ENCODE measurements at regions of chr1 and their contacts with region 1.

Region 1: DNA sequence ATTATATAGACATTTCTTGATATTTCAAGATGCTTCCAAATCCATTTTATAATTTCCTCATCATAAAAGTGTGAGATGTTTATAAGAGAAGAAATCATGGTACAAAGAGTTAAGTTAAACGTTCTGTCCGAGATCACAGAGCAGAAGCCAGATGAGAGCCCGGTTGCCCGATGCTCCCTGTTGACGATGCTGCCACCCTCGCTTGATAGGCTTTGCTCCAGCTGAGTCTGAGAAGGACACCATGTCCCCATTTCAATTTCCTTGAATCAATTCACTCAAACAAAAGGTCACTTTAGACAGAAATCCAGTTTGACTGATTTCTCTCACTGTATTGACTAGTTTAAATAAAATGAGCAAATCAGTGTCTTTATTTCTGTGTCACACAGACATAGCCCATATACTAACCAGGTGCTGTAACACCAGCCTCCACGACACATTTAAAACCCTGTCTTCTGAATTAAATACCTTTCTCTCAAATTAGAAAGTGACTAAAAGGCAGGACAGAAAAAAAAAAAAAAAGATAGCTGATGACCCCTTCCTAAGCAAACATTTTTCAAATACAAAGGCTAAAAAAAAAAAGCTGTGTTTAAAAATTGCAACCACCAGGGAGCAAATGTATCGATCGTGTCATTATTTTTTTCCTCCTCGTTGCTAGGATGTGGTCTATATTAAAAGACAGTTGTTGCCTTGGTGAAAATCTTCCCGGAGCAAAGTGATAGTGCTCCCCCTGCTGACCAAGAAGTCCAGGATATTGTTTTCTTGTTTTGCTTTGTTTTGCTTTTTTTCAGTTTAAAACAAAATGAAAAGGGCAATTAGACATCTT is 35.2 kb downstream of the DNASE2B start:
- DNase-seq: peak; percentile 31 to 92 (median 53)
- ATAC-seq: peak; percentile 73
- H3K4me3 ChIP-seq: peak overlapping the region; percentile 34 to 46
- H3K4me3 Mint-ChIP-seq: peak overlapping the region; percentile 76
- H3K27ac ChIP-seq: peak overlapping the region; percentile 73 to 76
- H3K27ac Mint-ChIP-seq: peak overlapping the region; percentile 75
- H3K4me1 ChIP-seq: peaks cover 49% of the 10 kb centered on the region
- H3K4me1 Mint-ChIP-seq: peaks cover 9% of the 10 kb centered on the region
- H3K27me3 ChIP-seq: no peaks in the 10 kb centered on the region
- H3K27me3 Mint-ChIP-seq: no peaks in the 10 kb centered on the region
- CTCF ChIP-seq: peak; percentile 65

Region 2: GRCh38 chr1:83799594-83799993 is 633.9 kb before region 1 on chr1:
- CTCF ChIA-PET with region 1: no interaction called
- POLR2A ChIA-PET with region 1: no interaction called
- intact Hi-C with region 1: no loop called
- DNase-seq: no peak
- ATAC-seq: no peak
- H3K4me3 ChIP-seq: no peak overlapping the region
- H3K4me3 Mint-ChIP-seq: no peak overlapping the region
- H3K27ac ChIP-seq: no peak overlapping the region
- H3K27ac Mint-ChIP-seq: no peak overlapping the region
- H3K4me1 ChIP-seq: no peaks in the 10 kb centered on the region
- H3K4me1 Mint-ChIP-seq: no peaks in the 10 kb centered on the region
- H3K27me3 ChIP-seq: no peaks in the 10 kb centered on the region
- H3K27me3 Mint-ChIP-seq: no peaks in the 10 kb centered on the region
- CTCF ChIP-seq: no peak

Region 3: DNA sequence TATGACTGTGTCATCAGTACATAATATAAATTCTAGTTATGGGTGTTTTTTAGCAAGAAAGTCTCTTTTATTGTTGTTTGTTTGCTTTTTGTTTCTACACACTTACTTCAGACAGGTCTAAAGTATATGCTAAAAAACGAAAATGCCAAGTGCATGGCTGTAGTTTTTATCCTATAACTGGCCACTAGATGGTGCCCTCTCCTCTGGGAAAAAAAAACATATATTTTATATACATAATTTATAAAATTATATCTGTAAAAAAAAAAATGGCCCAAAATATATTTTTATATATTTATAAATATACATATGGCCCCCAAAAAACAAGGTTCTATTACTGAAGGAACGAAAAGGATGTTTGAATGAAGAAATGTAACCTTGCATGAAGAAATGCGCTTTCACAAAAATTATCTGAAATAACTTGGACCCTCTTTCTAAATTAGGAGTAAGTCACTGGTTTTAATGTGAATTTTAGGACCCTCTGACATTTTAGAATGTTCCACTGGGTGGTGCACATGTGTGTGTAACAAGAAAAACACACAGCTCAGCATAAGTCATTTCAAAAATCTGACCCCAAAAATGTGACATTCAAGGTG is 528.1 kb before region 1 on chr1:
- CTCF ChIA-PET with region 1: no interaction called
- POLR2A ChIA-PET with region 1: no interaction called
- intact Hi-C with region 1: loop called in 1 of 2 experiments (anchors 10 kb)
- DNase-seq: peak in 3 of 9 experiments; percentile 7 to 50 (median 40)
- ATAC-seq: peak; percentile 46
- H3K4me3 ChIP-seq: no peak overlapping the region
- H3K4me3 Mint-ChIP-seq: no peak overlapping the region
- H3K27ac ChIP-seq: no peak overlapping the region
- H3K27ac Mint-ChIP-seq: no peak overlapping the region
- H3K4me1 ChIP-seq: no peaks in the 10 kb centered on the region
- H3K4me1 Mint-ChIP-seq: no peaks in the 10 kb centered on the region
- H3K27me3 ChIP-seq: no peaks in the 10 kb centered on the region
- H3K27me3 Mint-ChIP-seq: peaks cover 9% of the 10 kb centered on the region
- CTCF ChIP-seq: peak; percentile 79

Region 4: GRCh38 chr1:84077476-84078107 is 355.9 kb before region 1 on chr1:
- CTCF ChIA-PET with region 1: no interaction called
- POLR2A ChIA-PET with region 1: no interaction called
- intact Hi-C with region 1: loop called in 1 of 2 experiments (anchors 5 kb)
- DNase-seq: peak; percentile 48 to 88 (median 74)
- ATAC-seq: peak; percentile 89
- H3K4me3 ChIP-seq: peak overlapping the region; percentile 90 to 91
- H3K4me3 Mint-ChIP-seq: peak overlapping the region; percentile 87
- H3K27ac ChIP-seq: peak overlapping the region; percentile 72 to 76
- H3K27ac Mint-ChIP-seq: peak overlapping the region; percentile 86
- H3K4me1 ChIP-seq: peaks cover 14% of the 10 kb centered on the region
- H3K4me1 Mint-ChIP-seq: peaks cover 13% of the 10 kb centered on the region
- H3K27me3 ChIP-seq: no peaks in the 10 kb centered on the region
- H3K27me3 Mint-ChIP-seq: no peaks in the 10 kb centered on the region
- CTCF ChIP-seq: no peak

Region 5: GRCh38 chr1:84382127-84382526 is 51.3 kb before region 1 on chr1:
- CTCF ChIA-PET with region 1: no interaction called
- POLR2A ChIA-PET with region 1: no interaction called
- intact Hi-C with region 1: no loop called
- DNase-seq: no peak
- ATAC-seq: no peak
- H3K4me3 ChIP-seq: no peak overlapping the region
- H3K4me3 Mint-ChIP-seq: no peak overlapping the region
- H3K27ac ChIP-seq: no peak overlapping the region
- H3K27ac Mint-ChIP-seq: no peak overlapping the region
- H3K4me1 ChIP-seq: no peaks in the 10 kb centered on the region
- H3K4me1 Mint-ChIP-seq: no peaks in the 10 kb centered on the region
- H3K27me3 ChIP-seq: no peaks in the 10 kb centered on the region
- H3K27me3 Mint-ChIP-seq: peaks cover 2% of the 10 kb centered on the region
- CTCF ChIP-seq: no peak

Region 6: GRCh38 chr1:84478876-84479868 is 45.7 kb after region 1 on chr1 and contains the start of gene RPF1:
- CTCF ChIA-PET with region 1: interaction called, 3 read pairs
- POLR2A ChIA-PET with region 1: interaction called, 3 read pairs
- intact Hi-C with region 1: loop called in 1 of 2 experiments (anchors 2 kb)
- DNase-seq: peak; percentile 55 to 90 (median 82)
- ATAC-seq: peak; percentile 96
- H3K4me3 ChIP-seq: peak within 1 kb of the TSS; percentile 81 to 83
- H3K4me3 Mint-ChIP-seq: peak within 1 kb of the TSS; percentile 99
- H3K27ac ChIP-seq: peak within 1 kb of the TSS; percentile 88
- H3K27ac Mint-ChIP-seq: peak within 1 kb of the TSS; percentile 99
- H3K4me1 ChIP-seq: peaks cover 31% of the 10 kb centered on the region
- H3K4me1 Mint-ChIP-seq: peaks cover 42% of the 10 kb centered on the region
- H3K27me3 ChIP-seq: peaks cover 0 to 10% of the 10 kb centered on the region in 2 experiments
- H3K27me3 Mint-ChIP-seq: peaks cover 26% of the 10 kb centered on the region
- CTCF ChIP-seq: no peak
- total RNA-seq, gene RPF1: 84.2 to 85.3 TPM

Region 7: GRCh38 chr1:84573967-84574842 is 140.7 kb after region 1 on chr1 and contains the start of gene CTBS:
- CTCF ChIA-PET with region 1: interaction called, 8 read pairs
- POLR2A ChIA-PET with region 1: interaction called, 7 read pairs
- intact Hi-C with region 1: loop called in 1 of 2 experiments (anchors 2 kb)
- DNase-seq: peak; percentile 67 to 93 (median 85)
- ATAC-seq: peak; percentile 91
- H3K4me3 ChIP-seq: peak within 1 kb of the TSS; percentile 81 to 92
- H3K4me3 Mint-ChIP-seq: peak within 1 kb of the TSS; percentile 96
- H3K27ac ChIP-seq: peak within 1 kb of the TSS; percentile 94 to 96
- H3K27ac Mint-ChIP-seq: peak within 1 kb of the TSS; percentile 99
- H3K4me1 ChIP-seq: peaks cover 20% of the 10 kb centered on the region
- H3K4me1 Mint-ChIP-seq: peaks cover 42% of the 10 kb centered on the region
- H3K27me3 ChIP-seq: no peaks in the 10 kb centered on the region
- H3K27me3 Mint-ChIP-seq: no peaks in the 10 kb centered on the region
- CTCF ChIP-seq: no peak
- total RNA-seq, gene CTBS: 17.3 to 19.7 TPM

Measured in CD8-positive, alpha-beta T cell (primary cell).